Natural killer cell (primary cell): ENCODE measurements at regions of chr5 and their contacts with region 1.

Region 1: DNA sequence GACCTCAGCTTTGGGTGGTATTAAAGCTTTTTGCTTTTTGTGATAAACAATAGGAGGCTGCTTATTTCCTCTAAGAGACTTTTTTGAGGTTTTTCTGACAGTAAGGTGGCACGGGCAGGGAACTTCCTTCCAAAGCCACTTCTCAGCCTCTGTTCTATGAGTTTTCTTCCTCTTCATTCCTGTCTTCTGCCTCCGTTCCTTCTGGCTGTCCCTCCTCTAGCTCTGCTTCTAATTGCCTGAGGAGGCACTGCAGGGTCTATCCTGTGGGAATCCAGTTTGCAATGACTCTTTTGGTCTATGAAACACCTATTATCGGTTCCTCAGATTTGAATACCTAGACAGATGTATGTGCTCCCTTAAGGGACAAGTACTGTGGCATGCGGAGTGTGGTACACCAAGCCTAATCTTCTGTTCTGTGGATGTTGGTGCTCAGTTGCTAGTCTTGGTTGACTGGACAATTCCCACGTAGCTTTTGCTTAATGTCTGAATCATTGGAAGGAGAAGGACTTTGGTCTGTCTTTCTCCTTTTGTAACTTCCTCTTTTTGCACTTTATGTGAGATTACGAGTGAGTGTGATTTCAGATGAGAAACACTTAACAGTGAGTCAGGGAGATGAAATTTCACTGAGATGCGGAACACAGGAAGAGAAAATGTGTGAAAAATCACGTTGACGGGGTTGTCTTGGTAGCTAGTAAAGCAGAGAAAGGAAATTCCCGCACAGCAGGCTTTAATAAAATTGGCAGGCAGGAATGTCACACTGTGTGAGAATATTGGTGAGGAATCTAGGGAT is 305.2 kb downstream of the EFNA5 start:
- DNase-seq: peak; percentile 21 to 45
- ATAC-seq: peak; percentile 78 to 87 (median 83)
- H3K4me3 ChIP-seq: no peak overlapping the region
- H3K4me3 Mint-ChIP-seq: peak overlapping the region; percentile 72
- H3K27ac ChIP-seq: peak overlapping the region; percentile 74
- H3K27ac Mint-ChIP-seq: peak overlapping the region; percentile 78 to 88
- H3K4me1 ChIP-seq: peaks cover 11% of the 10 kb centered on the region
- H3K4me1 Mint-ChIP-seq: peaks cover 31 to 40% of the 10 kb centered on the region in 2 donors
- H3K27me3 ChIP-seq: no peaks in the 10 kb centered on the region
- H3K27me3 Mint-ChIP-seq: no peaks in the 10 kb centered on the region
- CTCF ChIP-seq: no peak

Region 2: DNA sequence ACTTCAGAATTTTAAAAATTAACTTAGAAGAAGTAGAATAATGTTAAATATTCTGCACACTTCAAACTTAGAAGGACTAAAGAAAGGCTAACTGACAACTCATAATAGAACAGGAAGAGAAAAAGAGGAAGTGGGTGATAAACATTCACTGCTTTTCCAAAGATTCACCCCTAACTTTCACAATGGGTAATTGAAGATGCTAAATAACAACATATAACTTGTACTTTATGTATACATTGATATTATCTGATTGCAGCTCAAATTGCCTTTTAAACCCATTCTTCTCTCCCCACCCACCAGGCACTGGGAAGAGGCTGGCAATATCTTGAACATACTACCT is 71.3 kb before region 1 on chr5:
- intact Hi-C with region 1: loop called (anchors 10 kb)
- DNase-seq: no peak
- ATAC-seq: no peak
- H3K4me3 ChIP-seq: no peak overlapping the region
- H3K4me3 Mint-ChIP-seq: no peak overlapping the region
- H3K27ac ChIP-seq: no peak overlapping the region
- H3K27ac Mint-ChIP-seq: no peak overlapping the region
- H3K4me1 ChIP-seq: peaks cover 20% of the 10 kb centered on the region
- H3K4me1 Mint-ChIP-seq: peaks cover 55 to 57% of the 10 kb centered on the region in 2 donors
- H3K27me3 ChIP-seq: no peaks in the 10 kb centered on the region
- H3K27me3 Mint-ChIP-seq: peaks cover 3 to 11% of the 10 kb centered on the region in 2 donors
- CTCF ChIP-seq: no peak